BJ (cell line): ENCODE measurements at regions of chr11 and their contacts with region 1.

Region 1: DNA sequence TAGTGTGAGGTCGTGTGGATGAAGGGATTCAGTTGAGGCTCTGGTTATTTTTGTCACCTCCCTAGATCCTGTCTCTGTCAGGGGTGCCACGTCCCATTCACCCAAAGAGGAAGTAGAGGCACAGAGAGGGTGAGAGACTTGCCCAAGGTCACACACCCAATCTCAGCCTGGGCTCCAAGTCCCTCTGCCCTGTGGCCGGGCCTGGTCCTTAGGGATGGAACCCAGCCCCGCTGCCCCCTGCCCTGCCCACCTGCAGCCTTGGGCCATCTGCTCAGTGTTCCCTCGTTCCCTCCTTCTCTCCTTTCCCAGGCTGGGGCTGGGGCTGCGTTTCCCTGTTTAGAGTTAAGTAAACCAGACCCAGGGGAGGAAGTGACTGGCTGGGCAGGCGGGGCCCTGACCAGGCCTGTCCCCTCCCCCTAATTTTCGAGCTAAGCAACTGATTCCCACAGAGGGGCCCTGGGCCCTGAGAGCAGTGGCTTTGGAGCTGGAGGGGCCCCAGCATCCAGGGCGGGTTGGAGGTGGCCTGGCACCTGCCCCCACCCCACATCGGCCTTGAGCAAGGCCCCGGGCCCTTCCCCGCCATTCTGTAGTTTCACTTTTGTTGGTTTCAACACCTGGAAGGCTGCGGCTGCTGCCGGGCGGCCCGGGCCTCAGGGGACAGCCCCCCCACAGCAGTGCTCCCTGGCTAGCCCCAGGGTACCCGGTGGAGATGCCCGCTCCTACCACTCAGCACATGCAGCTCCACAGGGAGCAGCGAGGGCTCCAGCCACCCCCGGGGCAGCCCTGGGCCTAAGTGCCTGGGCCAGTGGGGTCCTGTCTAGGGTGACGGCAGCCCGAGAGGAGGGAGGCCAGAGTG is 1.5 kb downstream of the TCIRG1 start:
- DNase-seq: no peak
- H3K4me3 ChIP-seq: peak overlapping the region; percentile 66
- H3K27me3 ChIP-seq: no peaks in the 10 kb centered on the region
- CTCF ChIP-seq: no peak

Region 2: GRCh38 chr11:68010090-68011041 is 30.0 kb before region 1 on chr11 and contains the start of gene ALDH3B1:
- CTCF ChIA-PET with region 1: interaction called, 13 read pairs
- POLR2A ChIA-PET with region 1: interaction called, 4 read pairs
- DNase-seq: no peak
- H3K4me3 ChIP-seq: peak within 1 kb of the TSS; percentile 50
- H3K27me3 ChIP-seq: no peaks in the 10 kb centered on the region
- CTCF ChIP-seq: peak; percentile 33
- polyA plus RNA-seq, gene ALDH3B1: 48.4 and 74.2 TPM in 2 replicates

Region 3: DNA sequence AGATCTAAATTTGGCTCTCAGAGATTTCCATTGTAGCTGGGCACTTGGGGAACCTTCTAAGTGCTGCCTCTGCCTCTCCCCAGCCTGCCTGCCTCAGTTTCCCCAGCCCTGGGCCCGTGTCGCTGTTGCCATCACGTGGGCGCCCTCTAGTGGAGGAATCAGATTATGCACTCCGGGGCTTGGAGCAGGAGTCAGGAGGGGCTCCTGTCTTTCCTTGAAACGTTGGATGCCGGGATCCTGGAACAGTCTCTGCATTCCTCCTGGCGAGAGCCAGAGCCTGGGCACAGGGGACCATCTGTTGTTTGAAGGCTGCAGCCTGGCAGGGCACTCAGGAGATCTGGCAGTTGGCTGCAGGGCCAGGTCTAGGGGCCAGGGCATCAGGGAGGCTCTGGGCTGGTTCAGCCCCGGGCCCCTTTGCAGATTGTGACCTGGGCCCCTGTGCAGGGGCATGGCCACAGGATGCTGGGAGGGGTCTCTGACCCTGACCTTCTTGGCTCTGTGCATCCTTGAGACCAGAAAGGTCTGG is 343.7 kb after region 1 on chr11:
- CTCF ChIA-PET with region 1: no interaction called
- POLR2A ChIA-PET with region 1: interaction called, 16 read pairs
- DNase-seq: no peak
- H3K4me3 ChIP-seq: no peak overlapping the region
- H3K27me3 ChIP-seq: no peaks in the 10 kb centered on the region
- CTCF ChIP-seq: peak; percentile 97

Region 4: DNA sequence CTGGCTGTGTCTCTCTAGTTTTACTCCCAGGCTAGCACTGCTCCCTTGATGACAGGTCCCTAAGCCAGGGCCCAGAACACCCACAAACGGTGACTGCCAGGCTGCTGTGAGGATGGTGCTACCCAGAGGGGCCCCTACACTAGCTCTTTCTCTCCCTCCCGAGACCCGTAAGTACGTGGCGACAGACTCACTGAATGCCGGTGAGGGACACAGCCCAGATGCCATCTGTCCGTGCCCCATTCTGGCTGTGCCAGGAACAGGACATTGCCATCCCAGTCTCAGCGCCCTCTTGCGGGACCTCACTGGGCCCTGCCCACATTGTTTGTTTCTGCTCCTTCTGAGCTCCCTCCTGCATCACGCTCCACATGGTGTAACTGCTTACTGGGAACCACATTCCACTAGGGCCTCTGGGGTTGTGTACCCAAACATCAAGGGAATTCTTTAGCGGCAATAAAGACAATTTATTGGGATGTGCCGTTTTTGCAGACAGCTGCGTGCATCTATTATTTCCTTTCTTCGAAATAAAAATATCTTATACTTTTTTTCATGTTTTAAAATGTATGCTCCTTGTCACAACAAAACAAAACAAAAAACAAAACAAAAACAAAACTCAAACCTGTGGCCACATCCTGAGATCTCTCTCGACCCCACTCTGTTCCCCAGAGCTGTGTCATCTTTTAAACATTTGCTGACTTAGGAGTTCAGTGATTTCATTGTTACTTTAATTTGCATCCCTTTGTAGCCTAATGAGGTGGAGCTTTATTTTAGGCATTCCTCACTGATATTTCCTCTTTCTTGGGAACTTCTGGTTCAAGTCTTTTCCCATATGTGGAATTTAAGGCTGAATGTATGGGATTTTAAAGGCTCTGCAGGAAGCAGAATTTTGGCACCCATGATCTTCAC is 1004.0 kb after region 1 on chr11:
- CTCF ChIA-PET with region 1: no interaction called
- POLR2A ChIA-PET with region 1: interaction called, 21 read pairs
- DNase-seq: peak; percentile 66
- H3K4me3 ChIP-seq: no peak overlapping the region
- H3K27me3 ChIP-seq: no peaks in the 10 kb centered on the region
- CTCF ChIP-seq: peak; percentile 87